Calu3 (cell line): ENCODE measurements at regions of chr11 and their contacts with region 1.

Region 1: GRCh38 chr11:121112498-121113455 is 11.7 kb downstream of the TECTA start:
- DNase-seq: peak; percentile 42
- H3K4me3 Mint-ChIP-seq: no peak overlapping the region
- H3K27ac Mint-ChIP-seq: no peak overlapping the region
- H3K4me1 Mint-ChIP-seq: no peaks in the 10 kb centered on the region
- H3K27me3 Mint-ChIP-seq: peaks cover 61% of the 10 kb centered on the region
- CTCF ChIP-seq: no peak

Region 2: DNA sequence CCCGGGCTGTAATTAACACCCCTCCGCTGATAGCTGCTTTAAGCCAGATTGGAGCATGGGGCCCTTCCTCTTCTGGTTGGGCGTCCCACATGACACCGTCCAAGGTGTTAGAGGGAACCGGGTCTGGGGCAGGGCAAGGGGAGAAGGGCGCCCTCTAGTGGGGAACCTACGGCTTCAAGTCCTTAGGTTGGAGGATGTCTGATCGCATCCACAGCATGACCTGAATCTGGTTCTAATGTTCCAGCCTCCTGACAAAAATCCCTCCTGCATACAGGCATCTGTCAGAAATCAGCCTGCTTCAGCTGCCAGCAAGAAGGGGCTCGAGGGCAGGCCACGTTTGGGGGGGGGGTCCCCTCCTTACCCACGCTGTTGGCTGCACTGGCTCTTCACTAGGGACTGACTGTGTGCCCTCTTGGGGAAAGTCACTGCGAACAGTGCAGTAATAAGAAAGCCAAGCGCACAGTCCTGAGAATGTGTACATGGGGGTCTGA is 183.1 kb before region 1 on chr11:
- CTCF ChIA-PET with region 1: no interaction called
- intact Hi-C with region 1: loop called (anchors 10 kb)
- DNase-seq: peak; percentile 40
- H3K4me3 Mint-ChIP-seq: no peak overlapping the region
- H3K27ac Mint-ChIP-seq: no peak overlapping the region
- H3K4me1 Mint-ChIP-seq: no peaks in the 10 kb centered on the region
- H3K27me3 Mint-ChIP-seq: peaks cover 32% of the 10 kb centered on the region
- CTCF ChIP-seq: no peak